Gastrocnemius medialis (tissue), 4 donors: ENCODE measurements at regions of chr22 and their contacts with region 1.

Region 1: GRCh38 chr22:27632451-27633295 is 168.9 kb downstream of the MN1 start:
- DNase-seq: no peak
- ATAC-seq: no peak
- H3K4me3 ChIP-seq: no peak overlapping the region
- H3K27ac ChIP-seq: no peak overlapping the region
- H3K4me1 ChIP-seq: peaks cover 11 to 15% of the 10 kb centered on the region in 2 donors
- H3K27me3 ChIP-seq: no peaks in the 10 kb centered on the region
- CTCF ChIP-seq: no peak
- POLR2A ChIP-seq: no peak

Region 2: DNA sequence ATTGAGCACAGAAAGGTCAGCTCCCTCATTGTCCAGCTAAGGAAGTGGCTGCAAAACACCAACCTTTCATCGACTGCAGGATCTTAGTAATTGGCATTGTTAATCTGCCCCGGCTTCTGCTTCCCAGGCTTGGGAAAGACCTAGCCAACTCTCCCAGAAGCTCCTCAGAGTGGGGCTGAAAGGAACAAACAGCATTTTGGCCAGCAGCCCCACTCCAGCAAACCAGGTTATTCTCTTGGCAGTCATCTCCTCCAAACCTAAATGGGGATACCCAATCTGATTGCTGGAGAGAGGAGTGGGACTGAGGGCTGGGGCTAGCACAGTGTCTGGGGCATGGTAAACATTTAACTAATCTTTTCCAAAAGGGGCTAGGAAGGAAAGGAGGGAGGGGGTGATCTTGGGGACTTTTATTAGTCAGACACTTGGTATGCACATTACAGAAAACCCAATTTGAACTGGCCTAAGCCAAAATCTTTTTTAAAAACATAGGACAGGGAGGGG is 125.5 kb before region 1 on chr22:
- in situ Hi-C with region 1: no loop called
- intact Hi-C with region 1: loop called (anchors 2 kb)
- DNase-seq: no peak
- ATAC-seq: no peak
- H3K4me3 ChIP-seq: no peak overlapping the region
- H3K27ac ChIP-seq: peak overlapping the region in 2 of 4 donors; percentile 4 to 36
- H3K4me1 ChIP-seq: peaks cover 57 to 62% of the 10 kb centered on the region in 2 donors
- H3K27me3 ChIP-seq: no peaks in the 10 kb centered on the region
- CTCF ChIP-seq: no peak
- POLR2A ChIP-seq: no peak

Region 3: DNA sequence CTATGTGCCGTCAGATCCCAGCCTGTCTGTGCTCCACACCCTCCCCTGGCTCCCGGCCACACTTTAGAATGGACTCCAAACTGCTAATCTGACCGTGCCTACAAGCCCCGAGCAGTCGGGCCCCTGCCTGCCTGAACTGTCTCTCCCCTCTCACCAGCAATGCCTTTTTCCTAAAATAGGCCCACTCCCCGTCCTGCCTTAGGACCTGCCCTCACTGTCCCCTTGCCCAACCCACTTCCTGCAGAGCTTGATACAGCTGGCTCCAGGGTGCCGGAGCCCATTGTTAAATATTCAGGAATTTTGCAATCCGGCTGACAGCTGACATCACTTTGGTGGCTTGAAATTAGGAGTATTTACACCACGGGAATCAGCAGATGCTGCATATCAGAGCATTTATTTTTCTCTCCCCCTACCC is 147.5 kb after region 1 on chr22:
- in situ Hi-C with region 1: loop called in 2 of 4 experiments (anchors 10 to 25 kb)
- intact Hi-C with region 1: no loop called
- DNase-seq: no peak
- ATAC-seq: no peak
- H3K4me3 ChIP-seq: no peak overlapping the region
- H3K27ac ChIP-seq: peak overlapping the region; percentile 90 to 95 (median 94)
- H3K4me1 ChIP-seq: peaks cover 68 to 80% of the 10 kb centered on the region in 2 donors
- H3K27me3 ChIP-seq: no peaks in the 10 kb centered on the region
- CTCF ChIP-seq: no peak
- POLR2A ChIP-seq: no peak

Region 4: DNA sequence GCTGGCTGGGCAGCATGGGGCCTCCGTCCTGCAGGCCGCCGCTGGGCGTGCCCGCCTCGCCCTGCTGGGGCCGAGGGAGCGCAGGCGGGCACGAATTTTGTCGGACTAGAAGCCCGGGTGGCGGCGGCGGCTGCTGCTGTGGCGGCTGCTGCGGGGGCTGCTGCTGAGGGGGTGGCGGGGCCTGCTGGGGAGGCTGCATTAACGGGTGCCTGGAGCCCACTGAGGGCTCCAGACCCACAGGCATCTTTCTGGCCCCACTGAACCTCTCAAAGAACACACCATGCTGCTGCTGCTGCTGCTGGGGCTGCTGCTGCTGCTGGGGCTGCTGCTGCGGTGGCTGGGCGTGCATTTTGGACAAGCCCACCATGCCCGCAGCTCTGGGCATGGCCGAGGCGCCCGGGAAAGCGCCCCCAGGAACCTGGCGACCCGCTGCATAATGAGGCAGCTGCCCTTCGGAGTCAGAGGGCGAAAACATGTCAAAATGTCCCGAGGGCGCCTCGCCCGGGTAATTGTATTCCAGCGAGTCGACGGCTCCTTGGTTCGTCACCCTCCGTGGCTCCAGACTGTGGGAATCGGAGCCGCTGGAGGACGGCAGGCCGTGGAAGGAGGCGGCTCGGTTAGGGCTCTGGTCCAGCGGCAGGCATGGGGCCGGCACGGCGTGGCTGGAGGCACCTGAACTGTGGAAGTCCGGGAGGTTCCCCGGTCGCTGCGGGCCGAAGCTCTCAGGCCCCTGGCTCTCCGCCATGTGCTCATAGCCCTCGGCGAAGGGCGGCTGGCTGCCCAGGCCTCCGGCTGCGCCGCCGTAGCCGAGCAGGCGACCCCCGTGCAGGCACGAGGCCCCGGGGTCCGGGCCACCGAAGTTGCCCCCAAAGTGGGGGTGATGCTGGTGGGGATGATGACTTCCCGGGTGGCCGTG is 166.9 kb after region 1 on chr22:
- in situ Hi-C with region 1: loop called in 1 of 4 experiments (anchors 25 kb)
- intact Hi-C with region 1: no loop called
- DNase-seq: peak in 1 of 2 donors; percentile 72
- ATAC-seq: peak; percentile 14 to 16
- H3K4me3 ChIP-seq: peak overlapping the region; percentile 78 to 99 (median 84)
- H3K27ac ChIP-seq: peak overlapping the region; percentile 90 to 95 (median 94)
- H3K4me1 ChIP-seq: peaks cover 24 to 74% of the 10 kb centered on the region in 2 donors
- H3K27me3 ChIP-seq: no peaks in the 10 kb centered on the region
- CTCF ChIP-seq: no peak
- POLR2A ChIP-seq: no peak